ENCODE measurements at regions of chr12 and their contacts with region 1.

Region 1: GRCh38 chr12:116636701-116637519 is 77.7 kb downstream of the MAP1LC3B2 start:
- DNase-seq: peak; percentile 64 to 65
- H3K4me3 ChIP-seq: no peak overlapping the region
- H3K4me3 Mint-ChIP-seq: peak overlapping the region; percentile 63
- H3K27ac Mint-ChIP-seq: peak overlapping the region; percentile 87
- H3K4me1 ChIP-seq: peaks cover 63% of the 10 kb centered on the region
- H3K4me1 Mint-ChIP-seq: peaks cover 40% of the 10 kb centered on the region
- H3K27me3 ChIP-seq: no peaks in the 10 kb centered on the region
- H3K27me3 Mint-ChIP-seq: no peaks in the 10 kb centered on the region
- CTCF ChIP-seq: no peak

Region 2: GRCh38 chr12:116332705-116333380 is 304.1 kb before region 1 on chr12:
- CTCF ChIA-PET with region 1: no interaction called
- POLR2A ChIA-PET with region 1: no interaction called
- intact Hi-C with region 1: no loop called
- DNase-seq: no peak
- H3K4me3 ChIP-seq: no peak overlapping the region
- H3K4me3 Mint-ChIP-seq: no peak overlapping the region
- H3K27ac Mint-ChIP-seq: no peak overlapping the region
- H3K4me1 ChIP-seq: peaks cover 13% of the 10 kb centered on the region; the same call in 1 of the 2 replicates
- H3K4me1 Mint-ChIP-seq: peaks cover 14% of the 10 kb centered on the region
- H3K27me3 ChIP-seq: no peaks in the 10 kb centered on the region
- H3K27me3 Mint-ChIP-seq: no peaks in the 10 kb centered on the region
- CTCF ChIP-seq: no peak

Region 3: GRCh38 chr12:116455540-116456329 is 181.2 kb before region 1 on chr12:
- CTCF ChIA-PET with region 1: no interaction called
- POLR2A ChIA-PET with region 1: no interaction called
- intact Hi-C with region 1: no loop called
- DNase-seq: peak in 1 of 2 experiments; percentile 53
- H3K4me3 ChIP-seq: no peak overlapping the region
- H3K4me3 Mint-ChIP-seq: no peak overlapping the region
- H3K27ac Mint-ChIP-seq: peak overlapping the region; percentile 0
- H3K4me1 ChIP-seq: no peaks in the 10 kb centered on the region
- H3K4me1 Mint-ChIP-seq: peaks cover 18% of the 10 kb centered on the region
- H3K27me3 ChIP-seq: no peaks in the 10 kb centered on the region
- H3K27me3 Mint-ChIP-seq: no peaks in the 10 kb centered on the region
- CTCF ChIP-seq: no peak

Region 4: GRCh38 chr12:116620492-116621191 is 16.3 kb before region 1 on chr12:
- CTCF ChIA-PET with region 1: no interaction called
- POLR2A ChIA-PET with region 1: interaction called, 10 read pairs
- intact Hi-C with region 1: loop called (anchors 2 kb)
- DNase-seq: no peak
- H3K4me3 ChIP-seq: no peak overlapping the region
- H3K4me3 Mint-ChIP-seq: no peak overlapping the region
- H3K27ac Mint-ChIP-seq: peak overlapping the region; percentile 89
- H3K4me1 ChIP-seq: peaks cover 25% of the 10 kb centered on the region
- H3K4me1 Mint-ChIP-seq: peaks cover 25% of the 10 kb centered on the region
- H3K27me3 ChIP-seq: no peaks in the 10 kb centered on the region
- H3K27me3 Mint-ChIP-seq: no peaks in the 10 kb centered on the region
- CTCF ChIP-seq: no peak

Region 5: GRCh38 chr12:116662612-116663144 is 25.8 kb after region 1 on chr12:
- CTCF ChIA-PET with region 1: interaction called, 3 read pairs
- POLR2A ChIA-PET with region 1: interaction called, 4 read pairs
- intact Hi-C with region 1: loop called (anchors 1 kb)
- DNase-seq: peak; percentile 64 to 74
- H3K4me3 ChIP-seq: peak overlapping the region; percentile 56
- H3K4me3 Mint-ChIP-seq: peak overlapping the region; percentile 92
- H3K27ac Mint-ChIP-seq: peak overlapping the region; percentile 75
- H3K4me1 ChIP-seq: peaks cover 38% of the 10 kb centered on the region
- H3K4me1 Mint-ChIP-seq: peaks cover 33% of the 10 kb centered on the region
- H3K27me3 ChIP-seq: no peaks in the 10 kb centered on the region
- H3K27me3 Mint-ChIP-seq: no peaks in the 10 kb centered on the region
- CTCF ChIP-seq: peak in 1 of 2 experiments; percentile 9